Uterus (tissue), 4 donors: ENCODE measurements at regions of chrX and their contacts with region 1.

Region 1: DNA sequence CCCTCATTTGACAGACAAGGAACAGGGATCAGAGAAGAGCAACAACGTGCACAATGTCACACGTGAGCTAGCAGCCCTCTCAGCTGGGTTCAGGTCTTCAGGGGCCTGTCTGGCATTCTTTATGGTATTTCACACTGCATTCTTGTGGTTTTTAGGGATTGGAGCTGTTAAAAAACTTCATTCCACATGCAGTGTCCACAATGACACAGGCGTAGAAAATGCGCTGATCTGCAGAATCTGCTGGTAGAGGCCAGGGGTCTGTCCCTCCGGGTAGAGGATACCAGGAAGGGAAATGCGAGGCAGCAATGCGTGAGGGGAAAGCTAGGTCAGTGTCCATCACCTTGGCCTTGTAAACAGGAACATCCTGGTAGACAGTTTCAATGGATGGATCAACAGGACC is 36.6 kb downstream of the MAP7D3 start:
- DNase-seq: no peak
- H3K4me3 ChIP-seq: no peak overlapping the region
- H3K27ac ChIP-seq: peak overlapping the region in 1 of 2 donors; percentile 26
- H3K4me1 ChIP-seq: no peaks in the 10 kb centered on the region
- H3K27me3 ChIP-seq: no peaks in the 10 kb centered on the region
- CTCF ChIP-seq: no peak
- POLR2A ChIP-seq: no peak

Region 2: GRCh38 chrX:136028251-136028984 is 186.1 kb before region 1 on chrX:
- intact Hi-C with region 1: loop called (anchors 10 kb)
- DNase-seq: no peak
- H3K4me3 ChIP-seq: no peak overlapping the region
- H3K27ac ChIP-seq: peak overlapping the region; percentile 76 to 83
- H3K4me1 ChIP-seq: no peaks in the 10 kb centered on the region
- H3K27me3 ChIP-seq: no peaks in the 10 kb centered on the region
- CTCF ChIP-seq: peak; percentile 59 to 80 (median 70)
- POLR2A ChIP-seq: no peak